ENCODE measurements at regions of chr18 and their contacts with region 1.

Region 1: GRCh38 chr18:59996370-59996966 is 96.7 kb downstream of the PMAIP1 start:
- DNase-seq: no peak
- ATAC-seq: peak in 1 of 2 donors; percentile 63
- H3K4me3 ChIP-seq: no peak overlapping the region
- H3K27ac ChIP-seq: no peak overlapping the region
- H3K4me1 ChIP-seq: no peaks in the 10 kb centered on the region
- H3K27me3 ChIP-seq: no peaks in the 10 kb centered on the region
- CTCF ChIP-seq: peak; percentile 58

Region 2: GRCh38 chr18:60549338-60549960 is 553.0 kb after region 1 on chr18:
- intact Hi-C with region 1: loop called (anchors 10 kb)
- DNase-seq: no peak
- ATAC-seq: peak in 1 of 2 donors; percentile 52
- H3K4me3 ChIP-seq: no peak overlapping the region
- H3K27ac ChIP-seq: no peak overlapping the region
- H3K4me1 ChIP-seq: no peaks in the 10 kb centered on the region
- H3K27me3 ChIP-seq: no peaks in the 10 kb centered on the region
- CTCF ChIP-seq: peak; percentile 77